Cardiac septum (tissue), 1 donor: ENCODE measurements at regions of chr5 and their contacts with region 1.

Region 1: DNA sequence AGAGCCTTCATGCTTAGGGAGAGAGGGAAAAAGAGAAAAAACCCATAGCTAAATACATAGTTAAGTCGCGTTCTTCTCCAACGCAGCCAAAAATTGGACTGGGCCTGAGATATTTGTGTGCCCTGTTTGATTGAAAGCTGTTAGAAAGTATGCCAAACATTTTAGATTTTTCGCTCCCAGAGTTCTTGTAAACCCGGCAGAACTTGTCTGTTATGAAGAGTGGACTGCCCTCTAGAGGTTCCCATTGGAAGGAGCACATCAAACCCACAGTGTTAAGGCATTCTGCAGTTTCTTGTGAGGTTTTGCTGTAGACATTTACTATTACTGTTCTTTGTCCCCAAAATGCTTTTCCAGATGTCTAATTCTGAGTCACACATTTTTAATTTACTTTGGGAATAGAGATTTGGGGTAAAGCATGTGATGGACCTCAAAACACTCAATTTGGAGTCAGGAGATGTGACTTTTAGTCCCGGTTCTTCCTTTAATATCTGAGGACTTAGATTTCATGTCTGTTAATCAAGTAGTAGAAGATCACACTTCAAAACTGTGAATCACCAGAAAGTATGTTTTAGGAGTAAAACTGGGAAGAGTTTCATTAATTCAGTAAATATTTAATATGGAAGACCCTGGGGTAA is 96.6 kb downstream of the PCSK1 start:
- DNase-seq: no peak

Region 2: DNA sequence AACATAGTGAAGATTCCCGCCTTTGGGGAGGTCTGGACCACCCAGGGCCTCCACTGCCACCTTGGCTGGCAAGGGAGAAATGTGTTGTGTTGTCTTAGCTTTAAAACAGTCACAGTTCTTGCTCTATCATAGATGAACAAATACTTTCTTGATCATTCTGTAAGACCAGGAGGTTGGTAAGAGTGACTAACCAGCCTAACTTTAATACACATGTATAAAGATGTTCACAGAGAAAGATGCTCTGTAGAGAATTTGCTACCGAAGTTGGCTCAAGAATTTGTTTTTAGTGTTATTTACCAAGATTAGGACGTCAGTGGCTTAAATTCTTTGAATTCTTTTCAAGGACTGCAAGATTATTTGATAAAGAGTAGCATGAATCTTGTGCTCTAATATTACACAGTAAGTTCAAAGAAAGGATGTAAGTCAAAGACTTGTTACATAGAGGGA is 542.4 kb before region 1 on chr5:
- intact Hi-C with region 1: loop called (anchors 10 kb)
- DNase-seq: no peak

Region 3: GRCh38 chr5:95892780-95893354 is 443.6 kb before region 1 on chr5:
- intact Hi-C with region 1: loop called (anchors 10 kb)
- DNase-seq: no peak

Region 4: DNA sequence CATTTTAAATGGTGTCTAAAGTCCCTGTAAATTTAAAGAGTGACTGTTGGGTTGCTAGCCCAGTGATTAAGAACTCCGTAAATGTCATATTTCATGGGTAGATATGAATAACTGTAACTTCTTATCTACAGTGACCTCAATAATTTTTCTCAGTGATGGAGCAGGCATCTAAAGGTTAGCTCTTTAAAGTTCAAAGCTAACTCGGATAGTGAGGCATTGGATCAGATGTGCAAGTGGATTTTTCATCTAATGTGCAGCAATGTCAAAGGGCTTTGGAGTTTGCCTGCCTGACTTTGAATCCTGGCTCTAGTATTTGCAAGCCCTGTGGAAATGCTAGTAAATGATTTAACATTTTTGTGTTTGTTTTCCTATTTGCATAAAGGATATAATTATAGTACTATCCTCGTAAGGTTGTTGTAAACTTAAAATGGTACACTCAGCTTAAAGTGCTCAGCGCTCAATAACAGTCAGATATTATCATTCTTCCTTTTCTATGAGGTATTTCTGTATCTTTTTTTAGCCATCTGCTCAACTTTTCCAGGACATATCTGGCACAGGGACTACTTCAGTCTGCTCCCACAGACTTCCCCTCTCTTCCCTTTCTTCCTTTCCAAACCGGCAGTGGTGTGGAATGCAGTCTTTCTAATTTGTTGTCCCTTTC is 211.1 kb before region 1 on chr5:
- intact Hi-C with region 1: loop called (anchors 5 kb)
- DNase-seq: no peak

Region 5: DNA sequence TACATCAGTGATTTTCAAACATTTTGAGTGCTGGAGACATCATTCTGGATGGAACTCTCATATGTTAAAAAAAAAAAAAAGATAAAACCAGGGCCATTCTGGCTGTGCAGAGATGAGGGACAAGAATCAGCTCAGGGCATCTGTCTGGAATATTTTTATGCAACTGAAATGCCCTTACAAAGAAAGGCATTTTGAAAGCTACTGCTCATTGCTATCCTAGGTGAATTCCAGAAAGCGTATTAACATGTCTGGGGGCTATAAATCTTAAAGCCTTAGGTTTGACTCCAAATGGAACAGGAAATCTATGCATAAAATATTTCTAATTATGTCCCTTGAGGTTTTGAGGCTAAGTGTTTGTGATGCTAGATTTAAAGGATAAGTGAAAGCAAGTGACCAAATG is 111.5 kb after region 1 on chr5:
- intact Hi-C with region 1: no loop called
- DNase-seq: no peak